ENCODE measurements at regions of chr16 and their contacts with region 1.

Region 1: DNA sequence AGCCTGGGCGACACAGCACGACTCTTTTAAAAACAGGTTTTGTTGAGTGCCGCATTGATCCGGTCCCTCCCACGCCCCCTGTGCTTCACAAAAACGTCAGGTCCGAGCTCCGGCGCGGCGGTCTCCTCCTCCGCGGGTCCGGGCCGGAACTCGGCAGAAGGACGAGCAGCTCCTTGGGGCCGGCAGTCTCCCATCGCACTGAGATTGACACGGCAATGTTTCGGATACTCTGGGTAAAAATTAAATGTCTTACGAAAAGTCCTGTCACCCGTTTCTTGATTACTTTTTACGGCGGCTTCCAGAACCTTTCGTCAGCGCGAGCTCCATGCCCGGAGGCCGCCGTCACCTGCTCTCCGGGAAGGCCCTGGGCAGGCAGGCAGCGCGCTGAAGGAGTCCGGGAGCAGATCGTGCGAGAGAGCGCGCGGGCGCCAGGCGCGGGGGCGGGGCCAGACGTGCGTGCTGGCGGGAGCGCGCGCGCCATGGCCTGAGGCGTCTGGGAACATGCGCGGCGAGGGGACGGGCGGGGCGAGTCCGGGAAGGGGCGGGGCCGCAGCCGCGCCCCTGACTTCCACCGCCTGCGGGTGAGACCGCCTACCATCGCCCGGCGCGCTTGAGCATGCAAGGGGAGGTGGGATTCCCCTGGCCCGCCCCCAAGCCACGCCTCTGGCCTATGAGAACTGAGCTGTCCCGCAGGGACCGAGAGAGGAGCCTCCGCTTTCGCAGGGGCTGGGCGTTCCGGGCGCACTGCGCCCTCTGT is 11.7 kb upstream of the SRL start:
- DNase-seq: peak; percentile 100
- H3K4me3 Mint-ChIP-seq: peak overlapping the region; percentile 96
- H3K27ac Mint-ChIP-seq: peak overlapping the region; percentile 97
- H3K4me1 Mint-ChIP-seq: peaks cover 11% of the 10 kb centered on the region
- H3K27me3 Mint-ChIP-seq: no peaks in the 10 kb centered on the region

Region 2: DNA sequence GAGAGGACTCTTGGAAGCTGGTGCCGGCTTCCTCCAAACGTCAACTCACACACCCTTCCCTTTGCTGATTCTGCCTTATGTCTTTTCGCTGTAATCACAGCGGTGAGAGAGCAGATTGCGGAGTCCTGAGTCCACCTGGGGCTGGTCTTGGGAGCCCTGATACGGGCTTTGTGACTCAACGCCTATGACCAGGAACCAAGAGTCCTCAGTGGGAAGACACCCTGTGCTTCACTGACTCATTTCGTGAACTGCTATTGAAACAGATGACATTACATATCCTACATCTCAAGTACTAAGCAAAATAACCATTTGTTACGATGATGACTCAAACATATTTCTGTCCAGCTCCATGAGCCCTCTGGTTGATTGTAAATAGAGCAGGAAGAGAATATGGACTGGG is 282.3 kb before region 1 on chr16:
- CTCF ChIA-PET with region 1: interaction called, 11 read pairs
- POLR2A ChIA-PET with region 1: no interaction called
- DNase-seq: no peak
- H3K4me3 Mint-ChIP-seq: no peak overlapping the region
- H3K27ac Mint-ChIP-seq: no peak overlapping the region
- H3K4me1 Mint-ChIP-seq: no peaks in the 10 kb centered on the region
- H3K27me3 Mint-ChIP-seq: no peaks in the 10 kb centered on the region

Region 3: DNA sequence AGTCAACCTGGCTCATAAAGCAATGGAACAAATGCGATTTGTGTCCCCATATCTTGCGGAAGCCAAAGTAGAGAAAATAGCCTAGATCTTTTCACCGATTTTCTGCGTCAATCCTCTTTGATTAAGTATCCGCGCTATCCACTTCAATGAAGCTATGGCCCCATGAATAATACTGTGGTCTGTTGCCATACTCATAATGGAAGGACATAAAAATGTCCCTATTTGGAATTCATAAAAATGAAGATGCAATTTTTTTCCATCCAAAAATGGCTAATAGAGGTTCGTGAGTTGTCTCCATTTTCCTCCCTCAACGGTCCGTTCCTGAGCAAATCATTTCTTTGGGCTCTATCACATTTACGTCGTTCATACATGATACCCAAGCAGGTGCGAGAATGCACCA is 112.0 kb before region 1 on chr16:
- CTCF ChIA-PET with region 1: interaction called, 10 read pairs
- POLR2A ChIA-PET with region 1: no interaction called
- DNase-seq: no peak
- H3K4me3 Mint-ChIP-seq: no peak overlapping the region
- H3K27ac Mint-ChIP-seq: peak overlapping the region; percentile 54
- H3K4me1 Mint-ChIP-seq: peaks cover 46% of the 10 kb centered on the region
- H3K27me3 Mint-ChIP-seq: peaks cover 5% of the 10 kb centered on the region

Region 4: GRCh38 chr16:4152266-4152665 is 101.3 kb before region 1 on chr16:
- CTCF ChIA-PET with region 1: no interaction called
- POLR2A ChIA-PET with region 1: no interaction called
- DNase-seq: no peak
- H3K4me3 Mint-ChIP-seq: no peak overlapping the region
- H3K27ac Mint-ChIP-seq: no peak overlapping the region
- H3K4me1 Mint-ChIP-seq: no peaks in the 10 kb centered on the region
- H3K27me3 Mint-ChIP-seq: peaks cover 11% of the 10 kb centered on the region

Region 5: DNA sequence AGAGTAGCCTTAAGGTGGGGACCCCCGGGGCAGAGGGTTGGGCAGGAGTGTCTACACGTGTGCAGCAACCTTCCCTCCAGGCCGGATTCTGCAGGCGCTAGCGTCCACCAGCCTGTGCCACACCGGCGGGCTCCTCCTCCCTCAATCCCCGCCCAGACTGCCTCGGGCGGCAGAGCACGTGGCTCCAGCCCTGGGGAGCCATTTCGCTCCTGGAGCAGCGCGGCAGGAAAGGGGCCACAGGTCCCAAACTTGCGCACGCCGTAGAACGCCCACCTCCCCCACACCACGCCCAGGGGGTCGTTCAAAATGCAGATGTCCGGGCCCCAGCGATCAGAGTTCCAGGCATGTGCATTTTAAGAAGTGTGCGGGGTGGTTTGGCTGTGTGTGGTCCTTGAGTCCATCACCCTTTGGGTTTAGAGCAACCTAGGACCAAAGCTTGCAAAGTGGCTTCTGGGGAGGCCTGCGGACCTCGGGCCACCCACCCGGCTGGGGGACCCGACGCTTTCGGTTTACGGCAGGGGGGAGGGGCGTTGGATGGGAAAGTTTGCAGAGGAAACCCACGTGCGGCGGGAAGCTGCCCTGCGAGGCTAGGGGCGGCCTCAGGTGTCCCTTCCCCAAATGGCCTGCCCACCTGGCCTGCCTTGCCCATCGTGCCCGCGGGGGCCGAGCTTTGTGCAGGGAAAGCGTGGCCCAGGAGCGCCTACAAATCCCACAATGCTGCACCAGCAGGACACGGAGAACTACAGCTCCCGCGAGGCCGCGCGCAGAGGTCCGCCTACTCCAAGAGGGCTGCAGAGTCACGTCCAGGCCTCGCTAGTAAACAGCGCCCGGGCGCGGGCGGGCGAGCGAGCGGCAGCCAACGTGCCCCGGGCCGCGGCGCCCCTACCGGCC is 17.8 kb after region 1 on chr16:
- CTCF ChIA-PET with region 1: interaction called, 71 read pairs
- POLR2A ChIA-PET with region 1: interaction called, 55 read pairs
- DNase-seq: peak; percentile 93
- H3K4me3 Mint-ChIP-seq: peak overlapping the region; percentile 81
- H3K27ac Mint-ChIP-seq: peak overlapping the region; percentile 89
- H3K4me1 Mint-ChIP-seq: peaks cover 22% of the 10 kb centered on the region
- H3K27me3 Mint-ChIP-seq: peaks cover 3% of the 10 kb centered on the region

Region 6: GRCh38 chr16:4297480-4297879 is 43.9 kb after region 1 on chr16:
- CTCF ChIA-PET with region 1: no interaction called
- POLR2A ChIA-PET with region 1: no interaction called
- DNase-seq: no peak
- H3K4me3 Mint-ChIP-seq: no peak overlapping the region
- H3K27ac Mint-ChIP-seq: no peak overlapping the region
- H3K4me1 Mint-ChIP-seq: no peaks in the 10 kb centered on the region
- H3K27me3 Mint-ChIP-seq: no peaks in the 10 kb centered on the region

Region 7: DNA sequence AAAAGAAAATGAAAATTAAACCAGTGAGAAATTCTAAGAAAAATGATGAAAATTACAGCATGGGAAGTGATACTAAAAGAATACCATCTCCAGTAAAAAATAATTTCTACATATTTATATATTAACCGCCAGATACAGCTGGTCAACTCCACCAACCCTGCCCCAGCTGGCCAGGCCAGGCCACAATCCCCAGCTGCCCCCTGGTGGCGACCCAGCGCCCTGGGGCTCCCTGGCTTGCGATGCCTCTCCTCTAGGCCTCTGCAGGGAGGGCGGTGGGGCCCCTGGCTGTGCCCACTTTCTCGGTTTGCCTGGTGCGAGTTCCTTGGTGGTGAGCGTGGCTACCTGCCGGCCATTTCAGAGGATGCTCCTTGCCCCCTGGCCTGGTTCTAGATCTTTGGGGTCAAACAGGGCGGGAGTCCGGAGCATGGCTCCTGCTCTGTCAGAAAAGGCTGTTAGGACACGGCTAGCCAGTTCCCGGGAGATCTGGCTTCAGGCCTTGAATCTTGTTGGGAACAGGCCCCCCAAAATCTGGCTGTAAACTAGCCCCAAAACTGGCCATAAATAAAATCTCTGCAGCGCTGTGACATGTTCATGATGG is 76.8 kb after region 1 on chr16:
- CTCF ChIA-PET with region 1: interaction called, 10 read pairs
- POLR2A ChIA-PET with region 1: interaction called, 3 read pairs
- DNase-seq: peak; percentile 75
- H3K4me3 Mint-ChIP-seq: no peak overlapping the region
- H3K27ac Mint-ChIP-seq: no peak overlapping the region
- H3K4me1 Mint-ChIP-seq: no peaks in the 10 kb centered on the region
- H3K27me3 Mint-ChIP-seq: peaks cover 15% of the 10 kb centered on the region

Region 8: GRCh38 chr16:4342866-4343744 is 89.5 kb after region 1 on chr16:
- CTCF ChIA-PET with region 1: no interaction called
- POLR2A ChIA-PET with region 1: no interaction called
- DNase-seq: no peak
- H3K4me3 Mint-ChIP-seq: no peak overlapping the region
- H3K27ac Mint-ChIP-seq: no peak overlapping the region
- H3K4me1 Mint-ChIP-seq: peaks cover under 1% of the 10 kb centered on the region
- H3K27me3 Mint-ChIP-seq: no peaks in the 10 kb centered on the region

Region 9: DNA sequence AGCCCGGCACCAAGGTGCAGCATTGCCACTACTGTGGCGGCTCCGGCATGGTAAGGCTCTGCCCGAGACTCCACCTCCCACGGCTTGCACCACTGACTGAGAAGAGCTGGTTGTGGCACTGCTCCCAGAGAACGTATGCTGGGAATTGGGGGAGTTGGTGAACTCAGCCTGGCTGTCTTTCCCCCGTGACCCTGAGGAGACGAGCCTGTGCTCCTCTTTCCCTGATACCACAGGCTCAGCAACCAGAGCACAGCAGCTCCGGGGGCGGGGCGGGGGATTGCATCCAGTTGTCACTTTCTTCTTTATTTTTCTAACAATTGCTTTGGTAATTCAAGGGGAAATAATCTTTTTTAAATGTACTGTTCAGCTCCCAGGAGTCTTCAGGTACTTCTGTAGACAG is 188.8 kb after region 1 on chr16:
- CTCF ChIA-PET with region 1: no interaction called
- POLR2A ChIA-PET with region 1: no interaction called
- DNase-seq: no peak
- H3K4me3 Mint-ChIP-seq: no peak overlapping the region
- H3K27ac Mint-ChIP-seq: no peak overlapping the region
- H3K4me1 Mint-ChIP-seq: peaks cover 5% of the 10 kb centered on the region
- H3K27me3 Mint-ChIP-seq: no peaks in the 10 kb centered on the region

Measured in activated CD4-positive, alpha-beta memory T cell treated with anti-CD3 and anti-CD28 coated beads, Interleukin-2, amount 10 ng/mL, durations not matched to agents 7 days and 5 days (primary cell).